CD14-positive monocyte (primary cell): ENCODE measurements at regions of chr7 and their contacts with region 1.

Region 1: DNA sequence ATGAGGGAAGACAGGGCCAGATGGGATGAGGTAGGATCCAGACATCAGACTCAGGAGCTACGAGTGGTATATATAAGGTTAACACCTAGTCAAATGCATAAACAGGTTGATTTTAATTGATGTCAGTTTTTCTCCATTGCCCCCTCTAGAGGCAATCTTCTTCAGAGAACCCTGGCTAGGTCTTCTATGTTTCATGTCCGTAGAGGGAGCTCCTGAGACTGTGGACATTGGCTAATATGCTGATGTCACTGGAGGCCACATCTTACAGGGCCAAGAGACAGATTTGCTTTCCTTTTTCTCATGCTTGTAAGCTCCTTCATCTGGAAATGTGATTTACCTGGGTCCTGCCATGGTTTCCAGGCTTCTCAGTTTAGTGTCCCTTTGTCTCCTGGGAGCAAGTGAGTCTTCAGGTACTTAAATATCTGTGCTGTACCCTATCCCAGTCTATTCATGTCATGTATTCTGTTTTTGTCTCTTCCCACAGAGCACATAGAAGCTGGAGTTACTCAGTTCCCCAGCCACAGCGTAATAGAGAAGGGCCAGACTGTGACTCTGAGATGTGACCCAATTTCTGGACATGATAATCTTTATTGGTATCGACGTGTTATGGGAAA is 161.6 kb upstream of the PRSS1 start:
- DNase-seq: peak; percentile 62 to 78 (median 70)
- H3K4me3 ChIP-seq: no peak overlapping the region
- H3K4me3 Mint-ChIP-seq: no peak overlapping the region
- H3K27ac ChIP-seq: peak overlapping the region in 1 of 2 donors; percentile 27
- H3K27ac Mint-ChIP-seq: peak overlapping the region in 6 of 7 donors; percentile 20 to 89 (median 68)
- H3K4me1 ChIP-seq: no peaks in the 10 kb centered on the region
- H3K4me1 Mint-ChIP-seq: peaks cover 6% of the 10 kb centered on the region
- H3K27me3 ChIP-seq: no peaks in the 10 kb centered on the region
- H3K27me3 Mint-ChIP-seq: no peaks in the 10 kb centered on the region
- CTCF ChIP-seq: peak; percentile 79

Region 2: DNA sequence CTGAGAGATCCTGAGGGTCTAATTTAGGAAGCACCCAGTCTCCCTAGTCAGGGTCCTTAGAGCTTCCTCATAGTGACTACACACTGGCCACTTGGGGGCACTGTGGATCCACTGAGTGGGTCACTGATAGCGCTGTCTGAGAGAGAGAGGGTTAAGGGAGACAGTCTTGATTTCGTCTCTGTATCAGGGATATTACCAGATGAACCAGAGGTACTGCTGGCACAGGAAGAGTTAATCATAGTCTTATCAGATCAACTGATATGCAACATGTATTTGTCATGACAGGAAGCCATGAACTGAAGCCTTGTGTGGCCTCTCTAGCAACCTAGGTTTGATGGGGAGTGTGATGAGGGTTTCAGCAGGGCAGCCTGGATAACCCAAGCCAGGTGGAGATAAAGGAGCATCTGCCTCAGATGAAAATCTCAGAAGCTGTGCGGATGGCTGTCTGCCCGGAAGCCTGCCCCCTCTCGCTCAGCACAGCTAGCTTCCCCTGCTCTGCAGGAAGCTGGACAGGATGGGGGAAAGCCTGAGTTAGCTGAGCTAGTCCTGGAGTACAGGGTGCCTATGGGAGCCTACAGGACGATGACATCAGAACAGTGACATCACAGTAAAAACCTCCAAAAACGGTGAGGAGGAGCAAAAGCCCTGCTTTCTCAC is 52.4 kb before region 1 on chr7:
- intact Hi-C with region 1: loop called in 1 of 2 experiments (anchors 10 kb)
- DNase-seq: peak; percentile 53 to 73 (median 65)
- H3K4me3 ChIP-seq: no peak overlapping the region
- H3K4me3 Mint-ChIP-seq: peak overlapping the region in 1 of 2 donors; percentile 79
- H3K27ac ChIP-seq: no peak overlapping the region
- H3K27ac Mint-ChIP-seq: peak overlapping the region in 1 of 7 donors; percentile 22
- H3K4me1 ChIP-seq: peaks cover 6% of the 10 kb centered on the region in 2 donors
- H3K4me1 Mint-ChIP-seq: peaks cover 10% of the 10 kb centered on the region
- H3K27me3 ChIP-seq: no peaks in the 10 kb centered on the region
- H3K27me3 Mint-ChIP-seq: no peaks in the 10 kb centered on the region
- CTCF ChIP-seq: peak; percentile 91

Region 3: DNA sequence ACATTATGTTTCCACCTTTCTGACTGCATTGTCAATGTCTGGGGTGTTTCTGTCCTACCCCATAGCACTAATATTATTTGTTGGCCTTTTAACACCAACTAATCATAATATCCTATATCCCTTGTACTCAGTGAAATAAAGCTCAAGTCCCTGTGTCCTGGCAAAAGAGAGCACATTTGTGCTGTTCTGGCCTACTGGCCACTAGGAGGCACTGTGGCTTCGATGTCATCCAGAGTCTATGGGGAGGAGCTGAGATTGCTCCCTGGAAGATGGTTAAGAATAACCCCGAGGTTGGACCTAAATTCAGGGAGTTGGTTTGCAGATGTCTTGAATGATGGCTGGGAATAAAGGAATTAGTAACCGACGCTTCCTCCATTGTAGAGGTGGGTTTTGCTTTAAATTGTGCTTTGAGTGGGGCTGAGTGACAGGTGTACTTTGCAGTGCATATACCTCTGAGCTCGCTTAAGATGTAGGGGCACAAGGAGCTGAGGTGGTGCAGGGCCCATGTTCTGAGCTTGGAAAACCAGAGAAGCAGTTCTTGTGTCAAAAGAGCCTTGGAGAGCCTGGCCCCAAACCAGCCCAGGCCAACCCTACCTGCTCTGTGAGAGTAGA is 29.6 kb before region 1 on chr7:
- intact Hi-C with region 1: loop called in 1 of 2 experiments (anchors 2 kb)
- DNase-seq: peak; percentile 43 to 67 (median 64)
- H3K4me3 ChIP-seq: no peak overlapping the region
- H3K4me3 Mint-ChIP-seq: no peak overlapping the region
- H3K27ac ChIP-seq: no peak overlapping the region
- H3K27ac Mint-ChIP-seq: peak overlapping the region in 1 of 7 donors; percentile 60
- H3K4me1 ChIP-seq: peaks cover 20 to 54% of the 10 kb centered on the region in 2 donors
- H3K4me1 Mint-ChIP-seq: peaks cover 54% of the 10 kb centered on the region
- H3K27me3 ChIP-seq: no peaks in the 10 kb centered on the region
- H3K27me3 Mint-ChIP-seq: peaks cover 0 to 2% (median 0%) of the 10 kb centered on the region in 3 donors
- CTCF ChIP-seq: peak; percentile 89

Region 4: DNA sequence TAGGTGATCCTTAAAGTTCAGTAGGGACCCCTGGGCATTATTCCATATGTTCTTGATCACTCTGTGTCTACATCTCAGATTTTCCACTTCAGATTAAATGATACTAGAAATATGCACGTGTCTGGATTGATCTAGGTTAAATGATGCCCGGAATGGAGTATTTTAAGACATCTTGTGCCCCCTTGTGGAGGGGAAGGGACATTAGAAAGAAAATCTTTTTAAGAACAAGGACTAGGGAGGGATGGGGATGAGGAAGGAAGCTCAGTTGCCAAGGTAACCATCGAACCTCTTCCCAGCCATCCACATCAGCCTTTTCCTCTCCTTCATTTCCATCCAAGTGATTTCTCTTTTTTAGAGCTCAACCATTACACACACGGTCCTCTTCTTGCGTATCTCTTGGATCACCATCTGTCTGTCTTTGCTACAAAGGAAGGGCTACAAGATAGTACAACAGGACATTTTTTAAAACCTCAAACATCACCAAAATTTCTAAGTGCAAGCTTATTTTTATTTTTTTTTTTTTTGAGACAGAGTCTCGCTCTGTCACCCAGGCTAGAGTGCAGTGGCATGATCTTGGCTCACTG is 223.6 kb after region 1 on chr7:
- intact Hi-C with region 1: no loop called
- DNase-seq: peak; percentile 12 to 50 (median 28)
- H3K4me3 ChIP-seq: no peak overlapping the region
- H3K4me3 Mint-ChIP-seq: no peak overlapping the region
- H3K27ac ChIP-seq: no peak overlapping the region
- H3K27ac Mint-ChIP-seq: no peak overlapping the region
- H3K4me1 ChIP-seq: no peaks in the 10 kb centered on the region
- H3K4me1 Mint-ChIP-seq: no peaks in the 10 kb centered on the region
- H3K27me3 ChIP-seq: peaks cover 5 to 6% of the 10 kb centered on the region in 2 donors
- H3K27me3 Mint-ChIP-seq: peaks cover 0 to 15% (median 4%) of the 10 kb centered on the region in 3 donors
- CTCF ChIP-seq: peak; percentile 76